ENCODE measurements at regions of chr6 and their contacts with region 1.

Region 1: GRCh38 chr6:32971581-32972352 is 3.4 kb downstream of the BRD2 start:
- DNase-seq: peak; percentile 100
- ATAC-seq: peak; percentile 50
- H3K4me3 ChIP-seq: peak overlapping the region; percentile 88 to 100 (median 96)
- H3K4me3 Mint-ChIP-seq: peak overlapping the region; percentile 96
- H3K27ac ChIP-seq: peak overlapping the region; percentile 96
- H3K27ac Mint-ChIP-seq: peak overlapping the region; percentile 99
- H3K4me1 ChIP-seq: peaks cover 32 to 43% of the 10 kb centered on the region in 2 donors
- H3K4me1 Mint-ChIP-seq: peaks cover 40% of the 10 kb centered on the region
- H3K27me3 ChIP-seq: no peaks in the 10 kb centered on the region
- H3K27me3 Mint-ChIP-seq: no peaks in the 10 kb centered on the region
- CTCF ChIP-seq: no peak

Region 2: DNA sequence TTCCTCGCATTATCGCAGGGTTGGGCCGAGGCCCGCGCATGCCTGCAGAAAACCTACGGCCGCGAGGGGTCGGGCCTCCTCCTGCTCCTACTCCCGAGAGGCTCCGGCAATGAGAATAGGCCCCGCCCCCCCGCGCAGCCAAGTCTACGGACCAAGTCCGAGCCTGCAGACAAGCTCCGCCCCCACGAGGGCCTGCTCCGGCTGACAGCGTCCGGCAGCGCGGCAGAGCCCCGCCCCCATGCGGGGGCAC is 776.2 kb before region 1 on chr6:
- CTCF ChIA-PET with region 1: no interaction called
- POLR2A ChIA-PET with region 1: interaction called, 5 read pairs
- intact Hi-C with region 1: loop called (anchors 5 kb)
- DNase-seq: no peak
- ATAC-seq: peak; percentile 83
- H3K4me3 ChIP-seq: peak overlapping the region in 4 of 5 experiments; percentile 89 to 99 (median 94)
- H3K4me3 Mint-ChIP-seq: peak overlapping the region; percentile 95
- H3K27ac ChIP-seq: peak overlapping the region; percentile 99 to 100
- H3K27ac Mint-ChIP-seq: peak overlapping the region; percentile 99
- H3K4me1 ChIP-seq: peaks cover 40 to 56% of the 10 kb centered on the region in 2 donors
- H3K4me1 Mint-ChIP-seq: peaks cover 58% of the 10 kb centered on the region
- H3K27me3 ChIP-seq: no peaks in the 10 kb centered on the region
- H3K27me3 Mint-ChIP-seq: no peaks in the 10 kb centered on the region
- CTCF ChIP-seq: peak; percentile 55

Region 3: DNA sequence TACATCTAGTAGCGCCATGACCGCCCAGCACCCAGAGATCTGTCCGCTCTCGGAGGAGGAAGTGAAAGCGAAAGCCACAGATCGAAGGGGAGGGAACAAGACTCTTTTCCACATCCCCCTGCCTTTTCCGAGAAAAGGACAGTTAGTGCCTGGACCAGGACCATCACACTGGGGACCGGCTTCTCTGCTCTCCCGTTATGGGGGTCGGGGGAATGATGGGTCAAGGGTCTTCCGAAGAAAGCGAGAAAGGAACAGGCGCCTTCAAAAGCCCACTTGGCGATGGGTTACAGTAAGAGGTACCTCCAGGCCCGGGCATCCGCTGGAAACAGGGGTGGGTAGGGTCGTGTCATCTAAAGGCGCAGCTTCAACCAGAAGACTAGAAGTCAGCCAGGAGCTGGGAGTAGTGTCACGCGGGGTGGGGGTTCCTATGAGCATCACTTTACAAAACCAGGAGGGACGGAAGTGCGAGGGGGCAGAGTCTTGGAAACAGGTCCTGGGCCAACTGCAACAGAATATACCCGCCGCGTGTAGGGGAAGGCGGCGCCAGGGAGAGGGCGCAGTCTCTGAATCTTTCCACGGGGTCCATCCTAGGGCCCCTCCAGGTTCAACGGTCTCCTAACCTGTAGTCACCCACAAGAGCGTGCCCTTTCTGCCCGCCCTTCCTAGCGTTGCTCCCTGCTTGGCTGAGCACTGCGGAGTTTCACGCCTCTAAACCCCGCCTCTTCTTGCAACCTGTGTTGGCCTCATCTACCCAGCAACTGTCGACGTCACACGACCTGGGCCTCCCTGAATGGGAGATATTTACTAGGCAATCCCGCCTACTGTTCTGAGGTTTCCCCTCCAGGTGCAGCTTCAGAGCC is 127.6 kb before region 1 on chr6 and contains the start of gene PSMB8:
- CTCF ChIA-PET with region 1: interaction called, 22 read pairs
- POLR2A ChIA-PET with region 1: interaction called, 53 read pairs
- intact Hi-C with region 1: loop called (anchors 1 kb)
- DNase-seq: peak; percentile 99
- ATAC-seq: peak; percentile 78
- H3K4me3 ChIP-seq: peak within 1 kb of the TSS; percentile 88 to 100 (median 95)
- H3K4me3 Mint-ChIP-seq: peak within 1 kb of the TSS; percentile 95
- H3K27ac ChIP-seq: peak within 1 kb of the TSS; percentile 96 to 97
- H3K27ac Mint-ChIP-seq: peak within 1 kb of the TSS; percentile 99
- H3K4me1 ChIP-seq: peaks cover 72 to 81% of the 10 kb centered on the region in 2 donors
- H3K4me1 Mint-ChIP-seq: peaks cover 86% of the 10 kb centered on the region
- H3K27me3 ChIP-seq: no peaks in the 10 kb centered on the region
- H3K27me3 Mint-ChIP-seq: no peaks in the 10 kb centered on the region
- CTCF ChIP-seq: no peak
- total RNA-seq, gene PSMB8: 127 and 129 TPM in 2 replicates

Region 4: GRCh38 chr6:32885698-32886286 is 86.0 kb before region 1 on chr6:
- CTCF ChIA-PET with region 1: interaction called, 43 read pairs
- POLR2A ChIA-PET with region 1: interaction called, 14 read pairs
- intact Hi-C with region 1: loop called (anchors 1 kb)
- DNase-seq: peak; percentile 87
- ATAC-seq: peak; percentile 65
- H3K4me3 ChIP-seq: no peak overlapping the region
- H3K4me3 Mint-ChIP-seq: no peak overlapping the region
- H3K27ac ChIP-seq: no peak overlapping the region
- H3K27ac Mint-ChIP-seq: no peak overlapping the region
- H3K4me1 ChIP-seq: peaks cover 14 to 15% of the 10 kb centered on the region in 2 donors
- H3K4me1 Mint-ChIP-seq: peaks cover 23% of the 10 kb centered on the region
- H3K27me3 ChIP-seq: no peaks in the 10 kb centered on the region
- H3K27me3 Mint-ChIP-seq: no peaks in the 10 kb centered on the region
- CTCF ChIP-seq: peak; percentile 78

Region 5: DNA sequence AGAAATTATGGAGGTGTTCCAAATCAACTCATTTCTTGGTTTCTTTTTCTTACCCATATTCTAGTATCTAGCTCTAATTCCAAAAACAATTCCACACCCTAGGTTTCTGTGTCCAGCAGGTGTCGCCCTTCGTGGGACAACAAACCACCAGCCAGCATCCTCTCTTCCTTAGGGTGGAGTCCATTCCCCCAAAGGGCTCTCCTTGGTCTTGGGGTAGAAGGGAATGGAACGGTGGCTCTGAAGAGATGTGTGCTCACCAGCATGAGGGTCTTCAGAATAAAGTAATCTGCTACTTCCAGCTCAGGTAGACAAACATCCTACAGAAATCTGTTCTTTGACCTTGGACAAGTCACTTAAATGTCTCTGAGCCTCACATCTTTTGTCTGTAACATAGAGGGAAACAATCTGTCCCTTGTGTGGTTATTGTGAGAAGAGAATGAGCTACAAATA is 38.1 kb before region 1 on chr6:
- CTCF ChIA-PET with region 1: interaction called, 142 read pairs
- POLR2A ChIA-PET with region 1: interaction called, 326 read pairs
- intact Hi-C with region 1: loop called (anchors 1 kb)
- DNase-seq: peak; percentile 82
- ATAC-seq: peak; percentile 60
- H3K4me3 ChIP-seq: no peak overlapping the region
- H3K4me3 Mint-ChIP-seq: peak overlapping the region; percentile 30
- H3K27ac ChIP-seq: peak overlapping the region; percentile 3 to 98
- H3K27ac Mint-ChIP-seq: peak overlapping the region; percentile 84
- H3K4me1 ChIP-seq: peaks cover 76 to 85% of the 10 kb centered on the region in 2 donors
- H3K4me1 Mint-ChIP-seq: peaks cover 88% of the 10 kb centered on the region
- H3K27me3 ChIP-seq: no peaks in the 10 kb centered on the region
- H3K27me3 Mint-ChIP-seq: no peaks in the 10 kb centered on the region
- CTCF ChIP-seq: peak; percentile 84

Region 6: GRCh38 chr6:32952817-32953739 is 18.7 kb before region 1 on chr6 and contains the start of gene HLA-DMA:
- CTCF ChIA-PET with region 1: interaction called, 822 read pairs
- POLR2A ChIA-PET with region 1: interaction called, 349 read pairs
- intact Hi-C with region 1: loop called (anchors 1 kb)
- DNase-seq: peak; percentile 97
- ATAC-seq: peak; percentile 91
- H3K4me3 ChIP-seq: peak within 1 kb of the TSS; percentile 72 to 98 (median 93)
- H3K4me3 Mint-ChIP-seq: peak within 1 kb of the TSS; percentile 96
- H3K27ac ChIP-seq: peak within 1 kb of the TSS; percentile 91 to 92
- H3K27ac Mint-ChIP-seq: peak within 1 kb of the TSS; percentile 98
- H3K4me1 ChIP-seq: peaks cover 70 to 84% of the 10 kb centered on the region in 2 donors
- H3K4me1 Mint-ChIP-seq: peaks cover 85% of the 10 kb centered on the region
- H3K27me3 ChIP-seq: no peaks in the 10 kb centered on the region
- H3K27me3 Mint-ChIP-seq: no peaks in the 10 kb centered on the region
- CTCF ChIP-seq: peak; percentile 88
- total RNA-seq, gene HLA-DMA: 554 and 558 TPM in 2 replicates

Region 7: GRCh38 chr6:33075568-33076405 is 104.0 kb after region 1 on chr6 and contains the start of gene HLA-DPB1:
- CTCF ChIA-PET with region 1: no interaction called
- POLR2A ChIA-PET with region 1: interaction called, 13 read pairs
- intact Hi-C with region 1: no loop called
- DNase-seq: peak; percentile 93
- ATAC-seq: peak; percentile 81
- H3K4me3 ChIP-seq: peak within 1 kb of the TSS; percentile 79 to 99 (median 97)
- H3K4me3 Mint-ChIP-seq: peak within 1 kb of the TSS; percentile 97
- H3K27ac ChIP-seq: peak within 1 kb of the TSS; percentile 96 to 99
- H3K27ac Mint-ChIP-seq: peak within 1 kb of the TSS; percentile 98
- H3K4me1 ChIP-seq: peaks cover 48 to 50% of the 10 kb centered on the region in 2 donors
- H3K4me1 Mint-ChIP-seq: peaks cover 60% of the 10 kb centered on the region
- H3K27me3 ChIP-seq: no peaks in the 10 kb centered on the region
- H3K27me3 Mint-ChIP-seq: no peaks in the 10 kb centered on the region
- CTCF ChIP-seq: no peak
- total RNA-seq, gene HLA-DPB1: 1,068 and 1,104 TPM in 2 replicates

Region 8: GRCh38 chr6:34067814-34068213 is 1096.0 kb after region 1 on chr6:
- CTCF ChIA-PET with region 1: no interaction called
- POLR2A ChIA-PET with region 1: no interaction called
- intact Hi-C with region 1: no loop called
- DNase-seq: no peak
- ATAC-seq: no peak
- H3K4me3 ChIP-seq: no peak overlapping the region
- H3K4me3 Mint-ChIP-seq: no peak overlapping the region
- H3K27ac ChIP-seq: no peak overlapping the region
- H3K27ac Mint-ChIP-seq: no peak overlapping the region
- H3K4me1 ChIP-seq: no peaks in the 10 kb centered on the region
- H3K4me1 Mint-ChIP-seq: no peaks in the 10 kb centered on the region
- H3K27me3 ChIP-seq: peaks cover 0 to 7% (median 0%) of the 10 kb centered on the region in 4 experiments
- H3K27me3 Mint-ChIP-seq: peaks cover 6% of the 10 kb centered on the region
- CTCF ChIP-seq: no peak